CD14-positive monocyte (primary cell): ENCODE measurements at regions of chr18 and their contacts with region 1.

Region 1: GRCh38 chr18:48161191-48161910 is 230.9 kb upstream of the SMAD2 start:
- DNase-seq: peak; percentile 18 to 55 (median 45)
- H3K4me3 ChIP-seq: peak overlapping the region; percentile 48 to 77 (median 51)
- H3K4me3 Mint-ChIP-seq: peak overlapping the region; percentile 78 to 88
- H3K27ac ChIP-seq: no peak overlapping the region
- H3K27ac Mint-ChIP-seq: peak overlapping the region in 3 of 7 donors; percentile 37 to 83 (median 45)
- H3K4me1 ChIP-seq: peaks cover 26 to 30% of the 10 kb centered on the region in 2 donors
- H3K4me1 Mint-ChIP-seq: peaks cover 17% of the 10 kb centered on the region
- H3K27me3 ChIP-seq: peaks cover 3 to 12% of the 10 kb centered on the region in 2 donors
- H3K27me3 Mint-ChIP-seq: peaks cover 13 to 42% (median 22%) of the 10 kb centered on the region in 3 donors
- CTCF ChIP-seq: no peak

Region 2: DNA sequence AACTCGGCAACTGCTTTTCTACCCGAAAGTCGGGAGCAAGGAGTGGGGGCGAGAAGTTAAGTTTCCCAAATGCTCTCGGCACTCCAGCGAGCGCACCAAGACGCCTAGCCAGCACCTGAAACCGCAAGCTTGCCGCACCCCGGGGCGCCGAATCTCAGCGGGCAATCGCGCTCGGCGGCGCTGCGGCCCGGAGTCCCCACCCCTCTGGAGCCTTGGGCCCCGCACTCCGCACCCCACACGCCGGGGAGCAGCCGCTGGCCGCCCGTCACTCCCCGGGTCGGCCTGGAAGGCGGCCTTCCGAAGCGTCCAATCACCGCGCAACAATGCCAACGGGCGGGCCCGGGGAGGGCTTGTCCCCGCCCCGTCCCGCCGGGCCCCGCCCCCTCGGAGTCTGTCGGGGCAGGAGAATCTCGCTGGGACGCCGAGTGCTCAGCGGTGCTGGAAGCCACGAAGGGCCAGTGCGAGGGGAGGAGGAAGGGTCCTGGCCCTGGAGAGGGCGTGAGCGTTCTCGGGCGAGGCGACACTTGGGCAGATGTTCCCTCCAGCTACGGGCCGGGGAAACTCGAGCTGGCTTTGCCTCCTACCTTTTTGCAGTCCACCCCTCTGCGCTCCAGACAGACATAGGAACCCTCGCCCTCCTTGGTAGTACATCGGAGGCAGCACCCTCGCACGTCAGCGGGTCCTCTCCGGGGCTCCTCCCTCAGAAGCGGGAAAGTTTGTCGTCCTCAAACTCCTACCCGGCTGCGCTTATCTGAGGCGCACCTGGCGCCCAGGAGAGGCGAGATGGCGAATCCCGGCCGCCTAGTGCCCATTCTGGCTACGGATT is 249.0 kb after region 1 on chr18:
- intact Hi-C with region 1: loop called (anchors 5 kb)
- DNase-seq: peak; percentile 68 to 71 (median 69)
- H3K4me3 ChIP-seq: peak overlapping the region; percentile 33 to 90 (median 56)
- H3K4me3 Mint-ChIP-seq: peak overlapping the region; percentile 81 to 87
- H3K27ac ChIP-seq: no peak overlapping the region
- H3K27ac Mint-ChIP-seq: no peak overlapping the region
- H3K4me1 ChIP-seq: peaks cover 8 to 31% of the 10 kb centered on the region in 2 donors
- H3K4me1 Mint-ChIP-seq: peaks cover 18% of the 10 kb centered on the region
- H3K27me3 ChIP-seq: peaks cover 45 to 65% of the 10 kb centered on the region in 2 donors
- H3K27me3 Mint-ChIP-seq: peaks cover 53 to 82% (median 58%) of the 10 kb centered on the region in 3 donors
- CTCF ChIP-seq: no peak